Endothelial cell of umbilical vein (primary cell): ENCODE measurements at regions of chr14 and their contacts with region 1.

Region 1: GRCh38 chr14:22852940-22853767 is 16.8 kb downstream of the MMP14 start:
- DNase-seq: peak; percentile 85
- H3K4me3 ChIP-seq: peak overlapping the region in 2 of 3 experiments; percentile 32 to 52
- H3K27ac ChIP-seq: peak overlapping the region; percentile 98
- H3K4me1 ChIP-seq: peaks cover 49% of the 10 kb centered on the region
- H3K27me3 ChIP-seq: no peaks in the 10 kb centered on the region
- CTCF ChIP-seq: peak; percentile 85 to 93
- POLR2A ChIP-seq: no peak

Region 2: GRCh38 chr14:22386924-22387775 is 466.0 kb before region 1 on chr14:
- CTCF ChIA-PET with region 1: interaction called, 5 read pairs
- POLR2A ChIA-PET with region 1: no interaction called
- dilution Hi-C with region 1: no loop called
- intact Hi-C with region 1: loop called (anchors 1 kb)
- DNase-seq: peak; percentile 77
- H3K4me3 ChIP-seq: no peak overlapping the region
- H3K27ac ChIP-seq: no peak overlapping the region
- H3K4me1 ChIP-seq: peaks cover 6% of the 10 kb centered on the region
- H3K27me3 ChIP-seq: peaks cover 6 to 15% of the 10 kb centered on the region in 2 experiments
- CTCF ChIP-seq: peak; percentile 68 to 70
- POLR2A ChIP-seq: no peak

Region 3: GRCh38 chr14:22556990-22557623 is 296.0 kb before region 1 on chr14:
- CTCF ChIA-PET with region 1: interaction called, 9 read pairs
- POLR2A ChIA-PET with region 1: no interaction called
- dilution Hi-C with region 1: no loop called
- intact Hi-C with region 1: loop called (anchors 1 kb)
- DNase-seq: peak; percentile 71
- H3K4me3 ChIP-seq: peak overlapping the region in 2 of 3 experiments; percentile 10 to 14
- H3K27ac ChIP-seq: peak overlapping the region; percentile 88
- H3K4me1 ChIP-seq: peaks cover 52% of the 10 kb centered on the region
- H3K27me3 ChIP-seq: no peaks in the 10 kb centered on the region
- CTCF ChIP-seq: peak; percentile 84 to 99
- POLR2A ChIP-seq: no peak

Region 4: GRCh38 chr14:22739423-22739822 is 113.7 kb before region 1 on chr14:
- CTCF ChIA-PET with region 1: no interaction called
- POLR2A ChIA-PET with region 1: no interaction called
- dilution Hi-C with region 1: no loop called
- intact Hi-C with region 1: loop called (anchors 1 kb)
- DNase-seq: peak; percentile 88
- H3K4me3 ChIP-seq: no peak overlapping the region
- H3K27ac ChIP-seq: peak overlapping the region; percentile 97
- H3K4me1 ChIP-seq: peaks cover 30% of the 10 kb centered on the region
- H3K27me3 ChIP-seq: no peaks in the 10 kb centered on the region
- CTCF ChIP-seq: no peak
- POLR2A ChIP-seq: no peak

Region 5: DNA sequence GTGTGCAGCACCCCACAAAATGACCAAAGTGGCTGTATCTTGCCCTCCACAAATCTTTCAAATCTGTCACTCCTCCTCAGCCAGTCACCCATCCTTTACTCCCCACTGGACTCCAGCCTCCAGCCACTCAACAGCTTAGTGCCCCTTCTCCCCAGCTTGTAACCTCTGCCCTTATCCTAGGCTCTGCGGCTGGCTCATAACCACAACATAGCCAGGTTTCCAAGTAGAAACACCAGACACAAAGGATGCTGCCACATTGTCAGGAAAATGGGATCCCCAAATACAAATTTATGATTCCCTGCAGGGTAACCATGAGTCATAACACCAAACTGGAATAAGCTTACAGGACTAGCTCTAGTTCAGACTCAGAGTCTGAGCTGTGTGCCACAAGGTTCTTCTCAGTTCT is 71.6 kb before region 1 on chr14:
- CTCF ChIA-PET with region 1: interaction called, 3 read pairs
- POLR2A ChIA-PET with region 1: no interaction called
- dilution Hi-C with region 1: no loop called
- intact Hi-C with region 1: loop called (anchors 1 kb)
- DNase-seq: no peak
- H3K4me3 ChIP-seq: no peak overlapping the region
- H3K27ac ChIP-seq: no peak overlapping the region
- H3K4me1 ChIP-seq: peaks cover 2% of the 10 kb centered on the region
- H3K27me3 ChIP-seq: no peaks in the 10 kb centered on the region
- CTCF ChIP-seq: no peak
- POLR2A ChIP-seq: no peak

Region 6: DNA sequence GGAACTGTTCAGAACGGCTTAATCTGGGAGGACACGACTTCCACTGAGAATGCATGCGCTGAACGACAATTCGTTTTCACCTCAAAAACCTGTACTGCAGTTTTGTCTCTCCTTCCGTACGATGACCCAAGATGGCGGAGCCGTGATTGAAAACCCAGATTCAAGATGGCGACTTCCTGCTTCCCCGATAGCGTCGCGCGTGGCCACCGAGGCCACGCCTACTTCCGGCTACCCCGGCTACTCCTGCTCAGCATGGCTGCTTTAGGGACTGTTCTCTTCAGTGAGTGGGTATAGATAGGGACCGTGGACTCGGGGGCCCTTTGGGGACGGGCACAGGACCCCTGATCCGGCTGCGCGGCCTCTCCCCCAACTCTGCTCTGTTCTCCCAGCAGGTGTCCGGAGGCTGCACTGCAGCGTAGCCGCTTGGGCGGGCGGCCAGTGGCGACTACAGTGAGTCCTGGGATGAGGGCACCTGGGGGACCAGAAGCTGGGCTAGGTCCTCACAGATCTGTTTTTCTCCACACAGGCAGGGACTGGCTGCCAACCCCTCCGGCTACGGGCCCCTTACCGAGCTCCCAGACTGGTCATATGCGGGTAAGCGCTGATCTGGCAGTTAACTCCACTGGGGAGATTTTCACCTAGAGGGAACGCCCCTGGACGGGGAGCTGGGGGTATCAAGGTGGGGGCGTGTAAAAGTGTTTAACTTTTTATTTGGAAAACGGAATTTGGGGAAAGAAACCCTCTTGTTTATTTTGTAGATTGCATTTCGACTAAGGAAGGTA is 23.3 kb before region 1 on chr14 and contains the start of gene MRPL52:
- CTCF ChIA-PET with region 1: interaction called, 313 read pairs
- POLR2A ChIA-PET with region 1: interaction called, 3 read pairs
- dilution Hi-C with region 1: no loop called
- intact Hi-C with region 1: no loop called
- DNase-seq: peak; percentile 84
- H3K4me3 ChIP-seq: peak within 1 kb of the TSS; percentile 68 to 98 (median 97)
- H3K27ac ChIP-seq: peak within 1 kb of the TSS; percentile 92
- H3K4me1 ChIP-seq: peaks cover 27% of the 10 kb centered on the region
- H3K27me3 ChIP-seq: no peaks in the 10 kb centered on the region
- CTCF ChIP-seq: peak in 1 of 2 donors; percentile 4
- POLR2A ChIP-seq: peak; percentile 87
- total RNA-seq, gene MRPL52: 174 TPM in 2 replicates

Region 7: GRCh38 chr14:22872033-22872832 is 19.1 kb after region 1 on chr14:
- CTCF ChIA-PET with region 1: interaction called, 47 read pairs
- POLR2A ChIA-PET with region 1: no interaction called
- dilution Hi-C with region 1: no loop called
- intact Hi-C with region 1: loop called (anchors 1 kb)
- DNase-seq: peak; percentile 87
- H3K4me3 ChIP-seq: peak overlapping the region; percentile 68 to 78 (median 76)
- H3K27ac ChIP-seq: peak overlapping the region; percentile 89
- H3K4me1 ChIP-seq: peaks cover 18% of the 10 kb centered on the region
- H3K27me3 ChIP-seq: no peaks in the 10 kb centered on the region
- CTCF ChIP-seq: peak; percentile 90 to 97
- POLR2A ChIP-seq: peak; percentile 59

Region 8: DNA sequence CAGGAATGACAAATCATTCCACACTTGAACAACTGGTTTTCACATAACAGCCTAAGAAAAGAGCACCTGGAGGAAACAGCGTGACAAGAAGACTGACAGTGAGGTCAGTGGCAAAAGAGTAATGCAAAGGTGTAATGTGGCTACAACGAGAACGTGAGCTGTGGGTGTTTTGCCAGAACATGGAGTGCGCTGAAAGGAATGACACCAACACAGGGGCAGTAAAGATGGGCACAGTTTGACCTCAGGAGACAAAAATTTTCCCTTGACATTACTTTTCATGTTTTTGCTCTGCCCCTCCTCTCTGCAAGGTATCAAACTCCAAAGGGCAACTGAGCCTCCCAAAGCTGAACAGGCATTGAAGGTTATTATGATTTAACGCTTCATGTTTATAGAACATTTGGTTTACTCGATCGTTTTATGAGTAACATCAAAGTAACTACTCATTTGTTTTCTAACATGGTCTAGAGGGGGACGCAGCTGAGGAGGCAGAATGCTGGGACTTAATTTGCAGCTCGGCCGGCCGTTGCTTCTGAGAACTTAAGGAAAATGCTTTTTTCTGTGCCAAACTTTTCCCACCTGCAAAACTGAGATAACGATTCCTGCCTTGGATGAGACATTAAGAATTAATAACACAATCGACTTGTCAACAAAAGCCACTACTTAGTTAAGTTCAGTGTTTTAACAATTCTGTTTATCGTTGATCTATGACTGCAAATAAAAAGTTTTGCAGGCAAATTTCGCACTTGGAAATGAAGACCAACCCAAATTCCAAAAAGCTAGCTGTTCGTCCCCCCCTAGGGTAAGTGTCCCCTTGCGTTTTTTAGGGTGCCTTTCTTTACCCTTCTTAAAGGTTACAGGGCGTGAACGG is 102.8 kb after region 1 on chr14:
- CTCF ChIA-PET with region 1: no interaction called
- POLR2A ChIA-PET with region 1: no interaction called
- dilution Hi-C with region 1: no loop called
- intact Hi-C with region 1: no loop called
- DNase-seq: peak; percentile 53
- H3K4me3 ChIP-seq: peak overlapping the region; percentile 52 to 96 (median 94)
- H3K27ac ChIP-seq: peak overlapping the region; percentile 82
- H3K4me1 ChIP-seq: peaks cover 10% of the 10 kb centered on the region
- H3K27me3 ChIP-seq: no peaks in the 10 kb centered on the region
- CTCF ChIP-seq: no peak
- POLR2A ChIP-seq: no peak